RWPE1 (cell line): ENCODE measurements at regions of chr15 and their contacts with region 1.

Region 1: DNA sequence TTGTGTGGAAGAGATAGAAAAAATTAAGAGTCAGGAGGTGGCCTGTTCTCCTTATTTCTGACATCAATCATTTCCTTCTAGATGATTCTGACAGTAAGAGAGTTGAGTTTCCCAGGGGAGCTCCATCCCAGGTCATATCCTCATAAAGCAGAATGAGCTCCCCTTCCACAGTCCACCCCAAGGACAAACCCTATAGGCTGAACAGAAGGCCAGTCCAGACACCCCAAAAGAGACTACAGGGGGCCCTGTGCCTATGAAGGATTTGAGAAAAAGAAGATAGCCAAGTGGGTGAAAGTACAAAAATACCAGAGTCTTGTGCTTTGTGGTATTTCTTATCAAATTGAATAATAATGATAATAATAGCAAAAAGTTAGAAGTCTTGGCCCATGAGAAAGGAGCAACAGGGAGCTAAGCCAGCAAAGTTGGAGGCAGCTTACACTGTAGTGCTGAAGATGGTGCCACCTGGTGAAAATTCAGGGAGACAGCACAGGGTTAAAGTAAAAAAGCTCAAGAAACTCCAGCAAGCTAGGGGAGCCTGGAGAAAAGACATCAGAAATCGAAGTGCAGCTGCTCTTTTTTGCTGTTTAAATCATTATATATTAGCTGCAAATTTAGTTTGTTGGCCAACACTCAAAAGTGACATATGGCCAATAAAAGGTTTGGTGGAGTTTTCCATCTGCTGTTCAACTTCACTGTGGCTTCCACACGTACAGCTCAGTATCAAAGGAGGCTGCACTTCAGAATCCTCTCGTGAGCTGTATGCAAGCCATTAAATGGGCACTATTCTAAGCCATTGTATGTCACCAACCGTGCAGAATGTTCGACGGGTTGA is 35.8 kb upstream of the SLC24A5 start:
- DNase-seq: peak; percentile 48
- H3K27ac ChIP-seq: no peak overlapping the region
- CTCF ChIP-seq: peak; percentile 44

Region 2: DNA sequence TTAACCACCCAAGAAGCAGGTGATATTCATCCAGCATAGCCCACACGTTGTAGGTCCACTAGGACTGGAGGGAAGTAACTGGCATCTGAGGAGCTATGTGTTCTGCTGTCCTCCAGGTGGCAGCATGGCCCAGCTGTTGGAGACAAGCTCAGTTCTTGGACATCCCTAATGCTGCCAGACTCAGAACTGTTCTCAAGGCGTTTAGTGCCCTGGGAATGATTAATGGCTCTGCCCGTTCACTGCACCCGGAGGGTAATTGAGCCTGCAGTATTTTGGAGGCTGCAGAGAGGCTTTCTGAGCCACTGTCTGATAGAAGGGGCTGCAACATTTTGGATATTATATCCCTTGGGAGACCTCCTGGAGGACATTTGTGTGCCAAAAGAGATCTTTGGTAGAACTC is 888.9 kb before region 1 on chr15:
- CTCF ChIA-PET with region 1: interaction called, 13 read pairs
- POLR2A ChIA-PET with region 1: no interaction called
- DNase-seq: peak; percentile 68
- H3K27ac ChIP-seq: no peak overlapping the region
- CTCF ChIP-seq: peak; percentile 88

Region 3: GRCh38 chr15:47711654-47712053 is 373.3 kb before region 1 on chr15:
- CTCF ChIA-PET with region 1: interaction called, 10 read pairs
- POLR2A ChIA-PET with region 1: no interaction called
- DNase-seq: no peak
- H3K27ac ChIP-seq: no peak overlapping the region
- CTCF ChIP-seq: peak; percentile 77